ENCODE measurements at regions of chr11 and their contacts with region 1.

Region 1: GRCh38 chr11:62855571-62856332 is 16.4 kb upstream of the WDR74 start:
- DNase-seq: peak; percentile 96
- CTCF ChIP-seq: no peak

Region 2: DNA sequence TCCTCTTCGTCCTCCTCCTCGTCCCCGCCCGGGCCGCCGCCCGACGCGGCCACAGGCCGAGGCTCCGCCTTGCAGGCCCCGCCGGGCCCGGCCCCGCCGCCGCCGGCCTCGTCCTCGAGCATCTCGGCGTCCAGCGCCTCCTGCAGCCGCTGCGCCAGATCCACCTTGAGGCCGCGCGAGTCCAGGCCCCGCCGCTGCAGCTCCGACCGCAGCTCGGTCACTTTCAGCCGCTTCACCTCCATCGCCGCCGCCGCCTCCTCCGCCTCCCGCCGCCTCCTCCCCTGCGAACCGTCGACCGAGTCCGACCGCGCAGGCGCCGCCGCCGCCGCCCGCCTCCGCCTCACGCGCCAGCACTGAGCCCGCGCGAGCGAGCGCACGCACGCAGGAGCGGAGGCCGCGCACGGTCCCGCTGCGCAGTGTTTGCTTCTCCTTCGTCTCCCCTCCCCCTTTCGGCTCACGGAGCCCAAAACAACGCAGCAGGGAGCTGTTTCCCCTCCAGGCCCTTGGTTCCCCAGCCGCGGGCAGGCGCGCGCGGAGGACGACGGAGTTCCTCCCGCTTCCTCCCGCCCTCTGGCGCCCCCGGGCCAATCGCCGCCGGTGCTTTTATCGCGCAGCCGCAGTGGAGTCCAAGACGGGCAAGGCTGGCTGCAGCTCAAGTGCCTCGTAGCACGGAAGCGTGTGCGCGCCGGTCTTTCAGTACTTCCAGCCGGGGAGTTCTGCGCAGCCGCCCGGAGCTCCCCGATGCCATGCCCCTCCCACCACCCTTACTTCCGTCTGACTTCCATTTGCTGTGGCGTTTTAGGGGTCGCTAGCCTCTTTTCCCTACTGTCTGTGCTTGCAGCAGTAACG is 128.6 kb before region 1 on chr11 and contains the start of gene HNRNPUL2:
- CTCF ChIA-PET with region 1: no interaction called
- POLR2A ChIA-PET with region 1: interaction called, 17 read pairs
- DNase-seq: peak; percentile 98
- CTCF ChIP-seq: no peak

Region 3: GRCh38 chr11:62753736-62754603 is 101.8 kb before region 1 on chr11 and contains the start of gene ZBTB3:
- CTCF ChIA-PET with region 1: interaction called, 3 read pairs
- POLR2A ChIA-PET with region 1: interaction called, 19 read pairs
- DNase-seq: peak; percentile 96
- CTCF ChIP-seq: no peak

Region 4: DNA sequence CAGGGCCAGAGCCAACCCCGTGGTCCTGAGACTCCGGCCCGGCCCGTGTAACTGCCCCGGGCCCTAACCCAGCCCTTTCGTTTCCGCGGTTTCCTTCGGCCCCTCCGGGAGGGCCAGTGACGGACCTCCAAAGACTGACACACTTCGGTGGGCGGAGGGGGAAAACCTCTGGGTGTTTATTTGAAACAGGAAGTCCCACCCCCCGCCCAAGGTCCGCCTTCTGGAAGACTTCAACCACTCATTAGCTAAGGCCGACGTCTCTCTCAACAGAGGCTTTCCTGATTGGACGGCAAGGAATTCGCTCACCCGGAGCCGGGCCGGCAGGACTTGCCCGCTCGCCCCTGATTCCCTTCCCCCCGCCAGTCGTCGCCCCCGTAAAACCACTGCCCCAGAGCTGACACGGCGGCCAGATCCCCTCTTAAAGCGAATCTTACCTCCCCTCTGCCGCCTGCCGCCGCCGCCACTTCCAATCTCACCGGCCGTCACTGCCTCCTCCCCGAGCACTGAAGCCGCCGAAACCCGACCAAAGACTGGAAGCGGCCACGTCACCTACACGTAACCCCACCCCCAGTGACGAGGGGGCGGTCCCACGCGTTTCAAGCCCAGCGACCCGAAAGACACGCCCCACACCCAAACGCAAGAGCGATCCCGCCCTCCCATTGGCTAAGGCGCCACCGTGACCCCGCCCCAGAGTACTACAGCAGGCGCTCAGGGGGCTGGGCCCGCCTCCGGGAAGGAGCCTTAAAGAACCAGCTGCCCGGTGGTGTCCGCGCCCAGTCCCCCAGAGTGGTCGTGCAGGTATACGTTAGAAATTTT is 24.0 kb before region 1 on chr11 and contains the start of gene STX5:
- CTCF ChIA-PET with region 1: interaction called, 3 read pairs
- POLR2A ChIA-PET with region 1: interaction called, 19 read pairs
- DNase-seq: peak; percentile 98
- CTCF ChIP-seq: no peak

Region 5: DNA sequence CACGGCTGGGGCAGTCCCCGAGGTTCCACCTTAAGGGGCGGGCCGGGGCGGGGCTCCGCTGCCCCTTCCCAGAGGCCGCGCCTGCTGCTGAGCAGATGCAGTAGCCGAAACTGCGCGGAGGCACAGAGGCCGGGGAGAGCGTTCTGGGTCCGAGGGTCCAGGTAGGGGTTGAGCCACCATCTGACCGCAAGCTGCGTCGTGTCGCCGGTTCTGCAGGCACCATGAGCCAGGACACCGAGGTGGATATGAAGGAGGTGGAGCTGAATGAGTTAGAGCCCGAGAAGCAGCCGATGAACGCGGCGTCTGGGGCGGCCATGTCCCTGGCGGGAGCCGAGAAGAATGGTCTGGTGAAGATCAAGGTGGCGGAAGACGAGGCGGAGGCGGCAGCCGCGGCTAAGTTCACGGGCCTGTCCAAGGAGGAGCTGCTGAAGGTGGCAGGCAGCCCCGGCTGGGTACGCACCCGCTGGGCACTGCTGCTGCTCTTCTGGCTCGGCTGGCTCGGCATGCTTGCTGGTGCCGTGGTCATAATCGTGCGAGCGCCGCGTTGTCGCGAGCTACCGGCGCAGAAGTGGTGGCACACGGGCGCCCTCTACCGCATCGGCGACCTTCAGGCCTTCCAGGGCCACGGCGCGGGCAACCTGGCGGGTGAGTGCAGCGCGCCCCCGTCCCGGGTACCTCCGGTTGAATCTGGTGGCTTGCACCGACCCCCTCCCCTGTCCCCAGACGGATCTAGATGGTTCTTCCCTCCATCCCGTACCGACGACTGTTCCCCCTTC is 25.2 kb after region 1 on chr11 and contains the start of gene SLC3A2:
- CTCF ChIA-PET with region 1: interaction called, 12 read pairs
- POLR2A ChIA-PET with region 1: interaction called, 14 read pairs
- DNase-seq: peak; percentile 91
- CTCF ChIP-seq: peak; percentile 80

Region 6: GRCh38 chr11:62965574-62965973 is 109.8 kb after region 1 on chr11:
- CTCF ChIA-PET with region 1: no interaction called
- POLR2A ChIA-PET with region 1: no interaction called
- DNase-seq: no peak
- CTCF ChIP-seq: no peak

Region 7: DNA sequence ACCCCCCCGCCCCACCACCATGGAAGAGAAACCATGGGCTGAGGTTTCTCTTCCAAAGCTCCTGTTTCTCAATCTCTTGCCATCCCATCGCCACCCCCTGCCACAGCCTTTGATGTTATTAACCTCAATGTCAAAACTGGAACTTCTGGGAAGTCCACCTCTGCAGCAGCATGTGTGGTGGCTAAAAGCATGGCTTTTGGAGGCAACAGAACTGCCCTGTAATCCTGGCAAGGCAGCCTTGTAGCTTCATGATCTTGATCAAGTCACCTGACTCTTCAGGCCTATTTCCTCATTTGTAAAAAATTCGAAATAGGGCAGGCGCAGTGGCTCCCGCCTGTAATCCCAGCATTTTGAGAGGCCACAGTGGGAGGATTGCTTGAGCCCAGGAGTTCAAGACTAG is 1115.2 kb after region 1 on chr11:
- CTCF ChIA-PET with region 1: no interaction called
- POLR2A ChIA-PET with region 1: interaction called, 10 read pairs
- DNase-seq: no peak
- CTCF ChIP-seq: no peak